ENCODE measurements at regions of chr11 and their contacts with region 1.

Region 1: DNA sequence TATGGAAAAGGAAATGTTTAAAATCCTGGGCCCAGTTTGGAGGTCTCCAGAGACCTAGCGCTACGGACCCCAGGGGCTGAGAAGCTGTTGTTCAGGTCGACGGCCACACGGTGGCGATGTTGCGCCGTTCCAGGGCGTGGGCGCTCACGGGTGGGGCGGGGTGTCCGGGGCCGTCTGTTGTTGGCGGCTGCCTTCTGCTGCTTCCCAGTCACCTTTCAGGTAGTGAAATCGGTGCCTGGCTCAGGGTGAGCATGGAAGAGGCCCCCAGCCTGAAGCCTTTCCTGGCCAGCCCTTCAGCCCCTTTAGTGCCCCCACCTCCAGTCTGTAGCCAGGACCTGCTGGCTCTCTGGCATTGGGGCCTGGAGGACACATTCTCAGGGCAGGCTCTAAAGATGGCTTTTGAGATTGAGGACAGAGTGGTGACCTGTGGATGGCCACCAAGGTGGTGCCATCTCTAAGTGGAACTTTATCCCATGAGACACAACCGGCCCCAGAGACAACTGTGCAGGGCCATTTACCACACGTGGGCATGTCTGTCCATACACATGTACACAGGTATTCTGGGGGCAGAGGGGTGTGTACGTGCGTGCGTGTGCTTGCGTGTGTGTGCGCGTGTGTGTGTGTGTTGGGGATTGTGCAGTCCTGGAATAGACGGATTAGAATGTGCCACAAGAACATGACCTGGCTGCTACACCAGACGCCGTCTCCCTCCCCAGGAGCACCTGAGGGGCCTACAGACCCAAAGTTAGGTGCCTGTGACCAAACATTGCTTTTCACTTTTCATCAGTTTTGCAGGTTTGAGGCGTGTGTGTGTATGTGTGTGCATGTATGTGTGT is 53.8 kb downstream of the ST14 start:
- DNase-seq: peak; percentile 62 to 66
- H3K4me3 ChIP-seq: no peak overlapping the region
- H3K27ac ChIP-seq: no peak overlapping the region
- H3K4me1 ChIP-seq: peaks cover 0 to 4% of the 10 kb centered on the region in 2 donors
- H3K27me3 ChIP-seq: no peaks in the 10 kb centered on the region
- CTCF ChIP-seq: peak; percentile 81 to 96 (median 89)
- POLR2A ChIP-seq: no peak

Region 2: DNA sequence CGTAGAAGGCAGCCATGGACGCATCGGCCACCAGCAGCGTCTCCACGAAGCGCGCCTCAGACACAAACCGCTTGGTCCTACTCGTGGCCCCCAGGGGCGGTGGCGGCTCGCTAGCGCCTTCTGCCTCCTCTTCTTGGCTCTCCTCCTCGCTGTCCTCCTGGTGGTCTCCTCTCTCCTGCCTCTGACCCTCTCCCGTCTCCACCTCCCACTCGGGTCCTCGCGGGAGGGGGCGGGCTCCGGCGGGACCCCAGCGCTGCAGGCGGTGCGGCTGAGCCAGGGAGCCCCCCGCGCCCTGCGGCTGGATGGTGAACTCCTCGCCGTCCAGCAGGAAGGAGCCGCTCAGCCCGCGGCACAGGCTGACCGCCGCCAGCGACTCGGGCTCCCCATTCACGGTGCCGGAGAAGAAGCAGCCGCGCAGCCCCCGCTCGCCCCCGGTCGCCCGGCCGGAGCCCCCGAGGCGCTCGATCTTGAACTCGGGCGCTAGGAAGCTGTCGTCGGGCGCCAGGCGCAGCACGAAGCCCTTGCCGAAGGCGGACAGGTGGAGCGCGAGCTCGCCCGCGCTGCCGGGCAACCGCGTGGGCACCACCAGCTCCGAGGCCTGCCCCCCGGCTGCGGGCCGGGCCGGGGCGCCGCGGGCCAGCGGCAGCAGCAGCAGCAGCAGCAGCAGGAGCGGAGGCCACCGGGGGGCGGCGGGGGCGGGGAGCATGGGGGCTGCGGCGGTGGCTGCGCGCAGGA is 214.4 kb after region 1 on chr11:
- intact Hi-C with region 1: loop called (anchors 10 kb)
- DNase-seq: no peak
- H3K4me3 ChIP-seq: peak overlapping the region in 1 of 3 donors; percentile 32
- H3K27ac ChIP-seq: no peak overlapping the region
- H3K4me1 ChIP-seq: peaks cover 9 to 21% of the 10 kb centered on the region in 2 donors
- H3K27me3 ChIP-seq: no peaks in the 10 kb centered on the region
- CTCF ChIP-seq: no peak
- POLR2A ChIP-seq: no peak

Region 3: GRCh38 chr11:130548491-130548833 is 335.1 kb after region 1 on chr11:
- intact Hi-C with region 1: no loop called
- DNase-seq: no peak
- H3K4me3 ChIP-seq: no peak overlapping the region
- H3K27ac ChIP-seq: peak overlapping the region in 2 of 3 donors; percentile 21 to 31
- H3K4me1 ChIP-seq: peaks cover 11 to 16% of the 10 kb centered on the region in 2 donors
- H3K27me3 ChIP-seq: no peaks in the 10 kb centered on the region
- CTCF ChIP-seq: no peak
- POLR2A ChIP-seq: no peak